ENCODE measurements at regions of chr15 and their contacts with region 1.

Region 1: GRCh38 chr15:63891079-63891767 is 57.5 kb upstream of the HERC1 start:
- DNase-seq: peak; percentile 56 to 87 (median 68)
- ATAC-seq: no peak
- H3K4me3 ChIP-seq: no peak overlapping the region
- H3K4me3 Mint-ChIP-seq: peak overlapping the region; percentile 42
- H3K27ac ChIP-seq: peak overlapping the region; percentile 60 to 68
- H3K27ac Mint-ChIP-seq: peak overlapping the region; percentile 86
- H3K4me1 ChIP-seq: peaks cover 61% of the 10 kb centered on the region
- H3K4me1 Mint-ChIP-seq: peaks cover 76% of the 10 kb centered on the region
- H3K27me3 ChIP-seq: no peaks in the 10 kb centered on the region
- H3K27me3 Mint-ChIP-seq: no peaks in the 10 kb centered on the region
- CTCF ChIP-seq: peak; percentile 84

Region 2: DNA sequence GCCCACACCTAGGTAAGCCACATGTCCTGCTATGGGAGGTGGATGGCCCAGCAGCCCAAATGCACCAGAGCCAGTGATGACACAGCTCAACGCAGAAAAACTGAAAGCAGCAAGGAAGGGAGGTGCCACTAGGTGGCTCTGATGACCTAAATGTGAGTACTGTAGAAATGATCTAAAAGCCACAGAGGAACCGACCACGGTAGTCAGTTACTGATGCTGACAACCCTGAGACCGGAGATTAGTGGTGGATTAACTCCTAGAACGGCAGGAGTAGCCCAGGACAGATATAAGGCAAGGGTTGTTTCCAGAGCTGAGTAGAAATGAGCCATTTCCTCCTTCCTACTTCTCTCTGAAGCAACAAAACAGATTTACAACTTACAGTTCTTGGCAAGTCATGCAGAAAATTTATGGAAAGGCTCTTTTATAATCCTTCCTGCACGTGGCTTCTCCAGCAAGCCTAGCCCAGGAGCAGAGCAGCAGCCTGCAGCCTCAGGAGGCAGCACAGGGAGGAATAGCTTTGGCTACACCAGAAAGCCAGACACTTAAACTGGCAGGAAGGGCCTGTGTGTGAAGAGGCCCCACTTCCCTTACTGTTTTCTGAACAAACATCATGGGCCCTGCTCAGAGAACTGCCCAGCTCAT is 280.9 kb before region 1 on chr15:
- CTCF ChIA-PET with region 1: no interaction called
- POLR2A ChIA-PET with region 1: no interaction called
- intact Hi-C with region 1: loop called in 1 of 2 experiments (anchors 5 kb)
- DNase-seq: peak; percentile 47 to 88 (median 66)
- ATAC-seq: peak; percentile 81
- H3K4me3 ChIP-seq: no peak overlapping the region
- H3K4me3 Mint-ChIP-seq: peak overlapping the region; percentile 52
- H3K27ac ChIP-seq: peak overlapping the region; percentile 48 to 73
- H3K27ac Mint-ChIP-seq: peak overlapping the region; percentile 61
- H3K4me1 ChIP-seq: peaks cover 32% of the 10 kb centered on the region
- H3K4me1 Mint-ChIP-seq: peaks cover 46% of the 10 kb centered on the region
- H3K27me3 ChIP-seq: no peaks in the 10 kb centered on the region
- H3K27me3 Mint-ChIP-seq: no peaks in the 10 kb centered on the region
- CTCF ChIP-seq: peak; percentile 74

Region 3: DNA sequence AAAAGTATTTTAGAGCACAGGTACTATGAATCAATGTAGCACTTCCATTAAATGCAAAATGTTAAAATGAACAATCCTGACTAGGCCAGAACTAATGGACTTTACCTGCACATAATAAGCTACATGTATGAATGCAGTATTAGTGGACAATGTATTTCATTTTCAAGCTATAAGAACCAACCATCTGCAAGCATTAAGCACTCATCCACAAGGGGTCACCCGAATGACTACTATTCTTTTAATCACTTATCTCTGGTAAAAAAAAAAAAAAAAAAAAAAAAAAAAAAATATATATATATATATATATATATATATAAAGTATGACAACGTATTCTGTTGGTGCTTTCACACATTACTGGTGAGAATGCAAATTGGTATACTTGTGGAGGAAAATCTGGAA is 64.7 kb before region 1 on chr15:
- CTCF ChIA-PET with region 1: interaction called, 8 read pairs
- POLR2A ChIA-PET with region 1: interaction called, 8 read pairs
- intact Hi-C with region 1: loop called (anchors 1 to 2 kb)
- DNase-seq: peak in 4 of 14 experiments; percentile 45 to 75 (median 66)
- ATAC-seq: no peak
- H3K4me3 ChIP-seq: no peak overlapping the region
- H3K4me3 Mint-ChIP-seq: peak overlapping the region; percentile 74
- H3K27ac ChIP-seq: no peak overlapping the region
- H3K27ac Mint-ChIP-seq: peak overlapping the region; percentile 62
- H3K4me1 ChIP-seq: peaks cover 21% of the 10 kb centered on the region
- H3K4me1 Mint-ChIP-seq: peaks cover 91% of the 10 kb centered on the region
- H3K27me3 ChIP-seq: no peaks in the 10 kb centered on the region
- H3K27me3 Mint-ChIP-seq: no peaks in the 10 kb centered on the region
- CTCF ChIP-seq: peak; percentile 62

Region 4: DNA sequence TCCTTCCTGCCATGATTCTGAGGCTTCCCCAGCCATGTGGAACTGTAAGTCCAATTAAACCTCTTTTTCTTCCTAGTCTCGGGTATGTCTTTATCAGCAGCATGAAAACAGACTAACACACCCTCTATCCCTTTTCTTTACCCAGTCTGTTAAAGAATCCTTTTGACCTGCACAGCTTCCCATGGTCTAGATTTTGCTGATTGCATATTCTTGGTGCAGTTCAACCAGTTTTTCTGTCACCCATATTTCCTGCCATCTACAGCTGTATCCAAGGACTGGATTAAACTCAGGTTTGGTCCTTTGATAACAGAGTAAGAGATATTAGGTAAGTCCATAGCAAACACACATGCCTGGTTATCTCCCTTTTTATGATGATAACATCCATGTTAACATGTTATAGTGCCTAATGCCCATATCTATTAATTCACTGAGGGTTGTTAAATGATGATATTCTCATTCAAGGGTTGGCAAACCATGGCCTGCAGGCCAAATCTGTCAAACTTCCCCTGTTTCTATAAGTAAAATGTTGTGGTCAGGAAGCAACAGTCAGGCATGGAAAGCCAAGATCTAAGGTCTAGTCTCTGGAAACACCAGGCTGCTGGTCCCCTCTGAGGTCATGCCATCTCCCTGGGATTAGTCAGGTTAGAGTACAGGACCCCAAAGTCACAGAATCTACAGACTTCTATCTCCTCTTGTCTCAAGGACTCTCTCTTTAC is 42.6 kb before region 1 on chr15:
- CTCF ChIA-PET with region 1: no interaction called
- POLR2A ChIA-PET with region 1: no interaction called
- intact Hi-C with region 1: loop called in 1 of 2 experiments (anchors 5 kb)
- DNase-seq: no peak
- ATAC-seq: no peak
- H3K4me3 ChIP-seq: no peak overlapping the region
- H3K4me3 Mint-ChIP-seq: no peak overlapping the region
- H3K27ac ChIP-seq: no peak overlapping the region
- H3K27ac Mint-ChIP-seq: peak overlapping the region; percentile 30
- H3K4me1 ChIP-seq: no peaks in the 10 kb centered on the region
- H3K4me1 Mint-ChIP-seq: peaks cover 25% of the 10 kb centered on the region
- H3K27me3 ChIP-seq: no peaks in the 10 kb centered on the region
- H3K27me3 Mint-ChIP-seq: no peaks in the 10 kb centered on the region
- CTCF ChIP-seq: no peak

Region 5: GRCh38 chr15:63905558-63906265 is 14.5 kb after region 1 on chr15:
- CTCF ChIA-PET with region 1: no interaction called
- POLR2A ChIA-PET with region 1: interaction called, 25 read pairs
- intact Hi-C with region 1: no loop called
- DNase-seq: peak in 4 of 14 experiments; percentile 33 to 66 (median 39)
- ATAC-seq: peak; percentile 92
- H3K4me3 ChIP-seq: no peak overlapping the region
- H3K4me3 Mint-ChIP-seq: no peak overlapping the region
- H3K27ac ChIP-seq: peak overlapping the region; percentile 33 to 74
- H3K27ac Mint-ChIP-seq: peak overlapping the region; percentile 78
- H3K4me1 ChIP-seq: peaks cover 27% of the 10 kb centered on the region
- H3K4me1 Mint-ChIP-seq: peaks cover 43% of the 10 kb centered on the region
- H3K27me3 ChIP-seq: no peaks in the 10 kb centered on the region
- H3K27me3 Mint-ChIP-seq: no peaks in the 10 kb centered on the region
- CTCF ChIP-seq: no peak

Region 6: GRCh38 chr15:63950911-63951481 is 59.8 kb after region 1 on chr15:
- CTCF ChIA-PET with region 1: no interaction called
- POLR2A ChIA-PET with region 1: no interaction called
- intact Hi-C with region 1: no loop called
- DNase-seq: no peak
- ATAC-seq: no peak
- H3K4me3 ChIP-seq: no peak overlapping the region
- H3K4me3 Mint-ChIP-seq: no peak overlapping the region
- H3K27ac ChIP-seq: no peak overlapping the region
- H3K27ac Mint-ChIP-seq: no peak overlapping the region
- H3K4me1 ChIP-seq: no peaks in the 10 kb centered on the region
- H3K4me1 Mint-ChIP-seq: peaks cover 11% of the 10 kb centered on the region
- H3K27me3 ChIP-seq: no peaks in the 10 kb centered on the region
- H3K27me3 Mint-ChIP-seq: no peaks in the 10 kb centered on the region
- CTCF ChIP-seq: no peak

Region 7: DNA sequence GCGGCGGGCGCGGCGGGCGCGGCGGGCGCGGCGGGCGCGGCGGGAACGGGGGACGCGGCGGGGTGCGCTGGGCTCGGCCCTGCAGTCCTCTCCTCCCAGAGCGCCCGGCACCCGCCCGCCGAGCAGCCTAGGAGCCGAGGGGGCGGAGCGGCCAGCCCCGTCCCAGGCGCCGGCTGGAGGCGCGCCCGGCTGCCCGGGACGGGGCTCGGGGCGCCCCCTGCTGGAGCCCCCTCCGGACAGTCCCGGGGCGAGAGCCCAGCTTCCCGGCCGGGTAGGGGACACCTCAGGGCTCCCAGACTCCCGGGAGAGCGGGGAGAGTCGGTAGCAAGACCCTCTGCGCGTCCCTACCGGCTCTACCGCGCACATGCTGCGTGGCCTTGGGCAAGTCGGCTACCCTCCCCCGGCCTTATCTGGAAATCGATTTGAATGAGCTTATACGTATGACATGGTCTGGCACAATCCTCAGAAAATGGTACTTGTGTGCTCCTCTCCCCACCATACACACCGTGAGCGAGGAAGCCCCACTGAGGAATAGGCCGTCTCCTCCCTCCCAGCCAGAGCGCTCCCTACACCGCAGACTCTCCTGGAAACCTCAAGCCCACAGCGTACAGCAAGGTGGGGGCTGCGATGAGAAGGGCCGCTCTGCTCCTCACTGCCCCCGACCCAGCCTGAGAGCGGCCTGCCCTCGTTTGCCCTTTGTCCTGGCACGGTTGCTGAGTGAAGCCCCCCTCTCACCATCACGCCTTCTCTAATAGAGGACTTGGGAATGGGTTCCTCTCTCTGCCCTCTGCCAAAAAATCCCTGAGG is 155.3 kb after region 1 on chr15 and contains the start of gene DAPK2:
- CTCF ChIA-PET with region 1: interaction called, 12 read pairs
- POLR2A ChIA-PET with region 1: no interaction called
- intact Hi-C with region 1: no loop called
- DNase-seq: peak; percentile 16 to 85 (median 64)
- ATAC-seq: peak; percentile 78
- H3K4me3 ChIP-seq: peak within 1 kb of the TSS; percentile 50
- H3K4me3 Mint-ChIP-seq: peak within 1 kb of the TSS; percentile 80
- H3K27ac ChIP-seq: no peak within 1 kb of the TSS
- H3K27ac Mint-ChIP-seq: no peak within 1 kb of the TSS
- H3K4me1 ChIP-seq: peaks cover 18% of the 10 kb centered on the region
- H3K4me1 Mint-ChIP-seq: peaks cover 10% of the 10 kb centered on the region
- H3K27me3 ChIP-seq: peaks cover 0 to 9% of the 10 kb centered on the region in 2 experiments
- H3K27me3 Mint-ChIP-seq: peaks cover 20% of the 10 kb centered on the region
- CTCF ChIP-seq: peak; percentile 72
- total RNA-seq, gene DAPK2: 1.3 to 1.6 TPM